ENCODE measurements at regions of chr19 and their contacts with region 1.

Region 1: DNA sequence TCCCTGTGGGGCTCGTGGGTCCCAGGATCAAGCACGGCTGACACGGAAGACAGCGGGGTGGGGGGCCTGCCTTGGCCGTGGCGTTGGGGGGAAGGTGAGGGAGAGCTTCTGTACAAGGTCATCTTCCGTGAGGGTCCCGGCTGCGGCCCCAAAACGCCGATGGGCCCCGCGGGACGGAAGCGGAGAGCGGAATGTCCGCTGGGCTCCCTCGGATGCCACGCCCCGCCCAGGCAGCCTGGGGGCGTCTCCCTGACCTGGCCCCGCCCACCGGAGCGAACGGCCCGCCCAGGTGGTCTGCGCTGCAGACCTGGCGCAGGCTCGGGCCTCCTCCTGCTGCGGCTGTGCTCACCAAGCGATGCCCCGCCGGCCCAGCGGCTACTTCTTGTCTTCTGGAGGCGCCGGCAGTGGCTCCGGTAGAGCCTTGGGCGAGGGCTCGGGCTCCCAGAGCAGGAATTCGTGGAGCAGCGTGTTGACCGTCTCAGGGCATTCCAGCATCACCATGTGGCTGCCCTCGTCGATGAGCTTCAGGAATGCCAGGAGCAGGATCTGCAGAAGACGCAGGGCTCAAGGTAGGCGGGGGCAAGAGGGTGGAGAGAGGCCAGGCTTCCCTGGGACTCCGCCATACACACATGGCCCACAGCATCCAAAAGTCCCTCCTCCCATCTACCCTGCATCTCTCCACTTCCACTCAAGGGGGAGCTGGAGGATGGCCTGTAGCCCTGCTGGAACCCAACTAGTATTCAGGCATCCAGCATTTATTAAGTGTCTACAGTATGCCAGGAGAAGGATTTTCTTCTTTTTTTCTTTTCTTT is 10.7 kb downstream of the ABHD8 start:
- DNase-seq: peak; percentile 71 to 88 (median 79)
- ATAC-seq: peak; percentile 97
- H3K4me3 ChIP-seq: peak overlapping the region; percentile 80
- H3K4me3 Mint-ChIP-seq: peak overlapping the region; percentile 83 to 93 (median 92)
- H3K27ac ChIP-seq: peak overlapping the region; percentile 55
- H3K27ac Mint-ChIP-seq: peak overlapping the region; percentile 33 to 87 (median 77)
- H3K4me1 ChIP-seq: peaks cover 0 to 5% of the 10 kb centered on the region in 2 donors
- H3K4me1 Mint-ChIP-seq: peaks cover 0 to 7% (median 5%) of the 10 kb centered on the region in 7 donors
- H3K27me3 ChIP-seq: no peaks in the 10 kb centered on the region
- H3K27me3 Mint-ChIP-seq: peaks cover 0 to 5% (median 0%) of the 10 kb centered on the region in 5 donors

Region 2: GRCh38 chr19:17249887-17250548 is 42.5 kb before region 1 on chr19:
- CTCF ChIA-PET with region 1: no interaction called
- POLR2A ChIA-PET with region 1: no interaction called
- intact Hi-C with region 1: no loop called
- DNase-seq: no peak
- ATAC-seq: no peak
- H3K4me3 ChIP-seq: no peak overlapping the region
- H3K4me3 Mint-ChIP-seq: no peak overlapping the region
- H3K27ac ChIP-seq: no peak overlapping the region
- H3K27ac Mint-ChIP-seq: no peak overlapping the region
- H3K4me1 ChIP-seq: peaks cover 0 to 11% of the 10 kb centered on the region in 2 donors
- H3K4me1 Mint-ChIP-seq: peaks cover 0 to 9% (median 5%) of the 10 kb centered on the region in 7 donors
- H3K27me3 ChIP-seq: no peaks in the 10 kb centered on the region
- H3K27me3 Mint-ChIP-seq: peaks cover 0 to 12% (median 0%) of the 10 kb centered on the region in 5 donors

Region 3: DNA sequence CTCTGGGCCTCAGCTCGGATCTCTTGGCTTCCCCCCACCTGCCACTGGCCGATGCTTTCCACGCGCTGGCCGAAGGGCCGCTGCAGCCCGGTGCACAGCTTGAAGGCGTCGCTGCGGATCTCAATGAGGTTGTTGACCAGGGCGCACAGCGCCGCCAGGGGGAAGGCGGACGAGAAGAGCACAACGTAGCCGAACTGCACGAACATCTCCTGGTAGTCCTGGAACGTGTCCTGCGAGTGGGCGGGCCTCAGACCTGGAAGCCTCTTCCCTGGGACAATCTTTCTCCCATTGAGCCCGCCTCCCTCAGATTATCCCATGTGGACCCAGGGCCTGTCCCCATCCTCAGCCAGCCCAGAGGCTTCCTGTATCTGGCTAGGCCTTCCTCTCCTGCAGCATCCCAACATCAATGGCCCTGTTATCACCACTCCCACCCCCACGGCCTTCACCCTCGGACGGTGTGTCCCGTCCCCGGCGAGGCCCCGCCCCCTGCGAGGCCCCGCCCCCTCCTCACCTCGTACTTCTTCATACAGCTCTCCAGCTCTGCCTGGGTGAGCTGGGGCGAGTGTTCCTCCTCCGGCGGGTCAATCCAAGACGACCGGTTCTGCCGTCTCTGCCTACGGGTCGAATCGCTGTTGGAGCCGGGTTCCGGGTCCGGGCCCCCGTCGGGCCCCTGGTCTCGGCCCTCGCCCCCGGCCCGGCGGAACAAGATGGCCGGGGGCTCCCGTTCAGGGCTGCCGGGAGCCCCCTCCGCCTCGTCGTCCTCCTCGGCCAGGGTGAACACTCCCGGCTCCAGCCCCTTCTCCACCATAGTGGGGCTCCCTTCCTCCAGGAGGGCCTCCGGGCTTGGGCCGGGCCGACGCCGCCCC is 35.4 kb after region 1 on chr19:
- CTCF ChIA-PET with region 1: interaction called, 6 read pairs
- POLR2A ChIA-PET with region 1: interaction called, 6 read pairs
- intact Hi-C with region 1: loop called in 1 of 2 experiments (anchors 1 kb)
- DNase-seq: peak in 8 of 9 donors; percentile 35 to 61 (median 50)
- ATAC-seq: peak; percentile 79
- H3K4me3 ChIP-seq: peak overlapping the region; percentile 71
- H3K4me3 Mint-ChIP-seq: peak overlapping the region; percentile 71 to 85 (median 81)
- H3K27ac ChIP-seq: peak overlapping the region; percentile 84
- H3K27ac Mint-ChIP-seq: peak overlapping the region in 7 of 9 donors; percentile 48 to 84 (median 76)
- H3K4me1 ChIP-seq: peaks cover 6 to 7% of the 10 kb centered on the region in 2 donors
- H3K4me1 Mint-ChIP-seq: peaks cover 7 to 28% (median 15%) of the 10 kb centered on the region in 7 donors
- H3K27me3 ChIP-seq: no peaks in the 10 kb centered on the region
- H3K27me3 Mint-ChIP-seq: peaks cover 0 to 12% (median 0%) of the 10 kb centered on the region in 5 donors

Region 4: GRCh38 chr19:17346109-17346671 is 53.7 kb after region 1 on chr19:
- CTCF ChIA-PET with region 1: interaction called, 4 read pairs
- POLR2A ChIA-PET with region 1: no interaction called
- intact Hi-C with region 1: loop called in 1 of 2 experiments (anchors 1 kb)
- DNase-seq: peak; percentile 46 to 85 (median 71)
- ATAC-seq: peak; percentile 98
- H3K4me3 ChIP-seq: no peak overlapping the region
- H3K4me3 Mint-ChIP-seq: no peak overlapping the region
- H3K27ac ChIP-seq: no peak overlapping the region
- H3K27ac Mint-ChIP-seq: peak overlapping the region in 2 of 9 donors; percentile 13 to 46
- H3K4me1 ChIP-seq: peaks cover 0 to 5% of the 10 kb centered on the region in 2 donors
- H3K4me1 Mint-ChIP-seq: peaks cover 0 to 15% (median 6%) of the 10 kb centered on the region in 7 donors
- H3K27me3 ChIP-seq: peaks cover 0 to 2% of the 10 kb centered on the region in 2 donors
- H3K27me3 Mint-ChIP-seq: peaks cover 4 to 19% (median 7%) of the 10 kb centered on the region in 5 donors